Heart left ventricle (tissue), 16 donors: ENCODE measurements at regions of chr10 and their contacts with region 1.

Region 1: DNA sequence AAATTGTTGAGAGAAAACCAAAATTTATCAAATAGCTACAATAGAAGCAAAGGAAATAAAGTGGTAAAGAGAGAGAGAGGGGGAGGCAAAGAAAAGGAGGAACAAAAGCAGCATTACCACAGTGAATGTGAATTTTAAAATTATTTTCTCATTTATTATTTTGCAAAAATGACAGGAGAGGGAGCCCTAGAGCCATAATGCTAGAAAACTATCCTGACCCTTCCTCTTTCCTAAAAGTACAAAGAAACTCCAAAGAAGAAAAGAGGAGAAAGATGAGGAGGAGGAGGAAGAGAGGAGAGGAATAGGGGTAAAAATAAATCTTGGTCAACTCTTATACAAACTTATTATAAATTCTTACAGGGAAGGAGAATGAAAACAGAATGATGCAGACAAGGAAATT is 921.5 kb downstream of the NRG3 start:
- DNase-seq: no peak
- ATAC-seq: peak in 1 of 4 donors; percentile 31
- H3K4me3 ChIP-seq: no peak overlapping the region
- H3K27ac ChIP-seq: no peak overlapping the region
- H3K4me1 ChIP-seq: peaks cover 0 to 5% (median 0%) of the 10 kb centered on the region in 12 donors
- H3K27me3 ChIP-seq: no peaks in the 10 kb centered on the region
- CTCF ChIP-seq: peak in 9 of 12 donors; percentile 17 to 59 (median 39)
- POLR2A ChIP-seq: no peak

Region 2: DNA sequence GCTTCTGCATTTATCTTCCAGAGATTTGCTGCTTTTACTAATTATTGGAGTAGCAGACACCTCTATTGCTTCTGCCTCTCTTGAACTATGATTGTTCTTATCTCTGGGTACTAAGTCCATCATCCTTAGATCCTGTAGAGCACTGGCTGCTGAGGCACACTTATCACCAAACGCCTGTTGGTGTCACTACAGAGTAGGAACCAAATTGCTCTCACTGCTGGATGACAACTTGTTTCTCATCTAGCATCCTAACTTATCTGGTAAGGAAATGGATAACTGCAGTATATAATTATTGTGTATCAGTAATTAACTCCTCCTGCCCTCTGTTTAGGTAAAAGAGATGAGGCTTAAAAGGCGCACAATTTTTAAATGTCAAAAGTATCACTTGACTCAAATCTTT is 137.9 kb after region 1 on chr10:
- intact Hi-C with region 1: no loop called
- DNase-seq: no peak
- ATAC-seq: no peak
- H3K4me3 ChIP-seq: no peak overlapping the region
- H3K27ac ChIP-seq: no peak overlapping the region
- H3K4me1 ChIP-seq: no peaks in the 10 kb centered on the region
- H3K27me3 ChIP-seq: no peaks in the 10 kb centered on the region
- CTCF ChIP-seq: peak in 2 of 12 donors; percentile 19 to 23
- POLR2A ChIP-seq: no peak

Region 3: DNA sequence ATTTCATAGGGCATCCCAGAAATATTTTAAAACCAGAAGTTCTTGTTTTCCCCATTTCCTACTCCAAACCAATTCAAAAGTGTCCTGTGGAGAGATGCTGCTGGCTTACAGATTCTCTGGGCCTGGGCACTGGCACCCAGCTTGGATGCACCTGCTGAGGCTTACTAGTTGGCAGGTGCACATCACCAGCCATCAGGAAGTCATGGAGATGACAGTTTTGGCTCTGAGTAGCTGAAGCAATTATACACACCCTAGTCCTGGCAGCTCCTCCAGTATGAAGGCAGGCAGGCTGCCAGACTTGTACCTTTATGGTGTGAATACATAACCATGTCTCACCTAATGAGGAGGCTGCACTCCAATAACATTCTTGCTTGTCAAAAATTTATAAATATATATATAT is 1066.2 kb after region 1 on chr10:
- intact Hi-C with region 1: loop called in 1 of 10 experiments (anchors 10 kb)
- DNase-seq: no peak
- ATAC-seq: no peak
- H3K4me3 ChIP-seq: no peak overlapping the region
- H3K27ac ChIP-seq: no peak overlapping the region
- H3K4me1 ChIP-seq: no peaks in the 10 kb centered on the region
- H3K27me3 ChIP-seq: no peaks in the 10 kb centered on the region
- CTCF ChIP-seq: no peak
- POLR2A ChIP-seq: no peak

Region 4: DNA sequence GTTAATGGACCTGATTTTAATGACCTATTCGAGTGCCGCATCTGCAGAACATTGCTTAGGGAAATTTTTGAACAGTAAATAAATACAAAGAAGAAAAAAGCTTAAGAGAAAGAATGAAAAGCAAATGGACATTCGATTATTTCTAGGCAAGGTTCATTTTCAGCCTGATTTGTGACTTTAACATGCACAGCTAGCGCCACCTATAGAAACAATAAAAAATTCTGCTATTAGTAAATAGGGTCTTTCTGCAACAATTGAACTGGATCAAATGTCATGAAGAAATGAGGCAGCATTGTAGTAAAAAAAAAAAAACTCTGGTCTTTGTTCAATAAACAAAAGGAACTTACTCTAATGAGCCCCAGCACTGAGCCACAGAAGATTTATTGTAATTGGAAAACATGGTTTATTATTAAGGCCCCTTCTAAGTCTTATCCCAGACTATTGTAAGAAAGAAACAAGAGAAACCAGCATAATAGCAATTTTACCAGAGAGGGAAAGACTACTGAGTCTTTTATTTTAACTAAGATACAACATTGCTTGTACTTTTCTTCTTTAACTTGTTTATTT is 1301.4 kb after region 1 on chr10:
- intact Hi-C with region 1: loop called in 3 of 10 experiments (anchors 10 kb)
- DNase-seq: no peak
- ATAC-seq: no peak
- H3K4me3 ChIP-seq: no peak overlapping the region
- H3K27ac ChIP-seq: no peak overlapping the region
- H3K4me1 ChIP-seq: peaks cover 0 to 24% (median 11%) of the 10 kb centered on the region in 12 donors
- H3K27me3 ChIP-seq: peaks cover 0 to 4% (median 0%) of the 10 kb centered on the region in 9 donors
- CTCF ChIP-seq: peak in 11 of 12 donors; percentile 26 to 67 (median 48)
- POLR2A ChIP-seq: no peak